PC-3 (cell line): ENCODE measurements at regions of chr2 and their contacts with region 1.

Region 1: GRCh38 chr2:119921825-119922224 is 91.1 kb upstream of the EPB41L5 start:
- DNase-seq: no peak
- ATAC-seq: no peak
- H3K4me3 ChIP-seq: no peak overlapping the region
- H3K27ac ChIP-seq: no peak overlapping the region
- H3K4me1 ChIP-seq: no peaks in the 10 kb centered on the region
- H3K27me3 ChIP-seq: no peaks in the 10 kb centered on the region
- CTCF ChIP-seq: no peak

Region 2: GRCh38 chr2:119683713-119684443 is 237.9 kb before region 1 on chr2:
- CTCF ChIA-PET with region 1: no interaction called
- POLR2A ChIA-PET with region 1: no interaction called
- intact Hi-C with region 1: no loop called
- DNase-seq: no peak
- ATAC-seq: no peak
- H3K4me3 ChIP-seq: no peak overlapping the region
- H3K27ac ChIP-seq: no peak overlapping the region
- H3K4me1 ChIP-seq: peaks cover 8% of the 10 kb centered on the region; the same call in 1 of the 2 replicates
- H3K27me3 ChIP-seq: no peaks in the 10 kb centered on the region
- CTCF ChIP-seq: no peak

Region 3: DNA sequence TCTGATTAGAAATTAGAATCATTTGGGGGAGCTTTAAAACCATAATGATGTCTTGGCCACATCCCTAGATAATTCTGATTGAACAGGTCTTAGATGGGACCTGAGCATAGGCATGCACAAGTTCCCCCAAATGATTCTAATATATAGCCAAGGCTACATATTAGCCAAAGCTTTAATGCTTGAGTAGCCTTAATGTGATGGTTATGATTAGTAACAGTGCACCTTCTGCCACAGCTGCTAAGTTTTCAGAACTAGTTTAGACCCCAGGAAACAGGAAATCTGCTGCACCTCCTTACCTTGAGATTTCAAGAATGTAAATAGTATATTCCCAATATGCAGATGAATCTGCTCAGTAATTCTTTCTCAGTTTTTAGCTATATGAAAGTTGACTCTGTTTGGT is 42.3 kb before region 1 on chr2:
- CTCF ChIA-PET with region 1: interaction called, 26 read pairs
- POLR2A ChIA-PET with region 1: no interaction called
- intact Hi-C with region 1: no loop called
- DNase-seq: no peak
- ATAC-seq: no peak
- H3K4me3 ChIP-seq: no peak overlapping the region
- H3K27ac ChIP-seq: no peak overlapping the region
- H3K4me1 ChIP-seq: no peaks in the 10 kb centered on the region
- H3K27me3 ChIP-seq: no peaks in the 10 kb centered on the region
- CTCF ChIP-seq: no peak